WTC11 (cell line): ENCODE measurements at regions of chr10 and their contacts with region 1.

Region 1: GRCh38 chr10:128268015-128268722 is 141.9 kb upstream of the MKI67 start:
- DNase-seq: peak; percentile 85
- ATAC-seq: peak; percentile 92
- H3K4me3 Mint-ChIP-seq: no peak overlapping the region
- H3K27ac Mint-ChIP-seq: no peak overlapping the region
- H3K4me1 Mint-ChIP-seq: peaks cover 42% of the 10 kb centered on the region
- H3K27me3 Mint-ChIP-seq: 0 out of 2 replicates have a peak, but pooled peaks cover 4% of the 10 kb centered on the region
- CTCF ChIP-seq: peak; percentile 72

Region 2: DNA sequence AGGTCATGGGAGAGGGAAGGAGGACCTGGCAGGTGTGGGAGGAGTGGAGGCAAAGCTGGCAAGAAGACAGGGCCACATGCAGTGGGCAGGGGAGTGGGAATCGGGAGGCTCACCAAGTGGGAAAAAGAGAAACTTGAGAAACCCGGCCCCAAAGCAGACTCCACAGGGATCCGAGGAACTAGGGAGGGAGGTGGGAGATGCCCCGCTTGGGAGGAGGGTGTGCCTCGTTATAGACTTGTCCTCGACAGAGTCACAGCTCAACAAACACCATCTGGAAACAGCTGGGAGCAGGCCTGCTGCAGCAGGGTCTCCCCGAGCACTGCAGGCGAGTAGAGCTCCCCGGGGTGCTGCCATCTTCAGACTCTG is 196.8 kb before region 1 on chr10:
- CTCF ChIA-PET with region 1: no interaction called
- POLR2A ChIA-PET with region 1: no interaction called
- DNase-seq: no peak
- ATAC-seq: no peak
- H3K4me3 Mint-ChIP-seq: no peak overlapping the region
- H3K27ac Mint-ChIP-seq: no peak overlapping the region; the same call in 1 of the 2 replicates
- H3K4me1 Mint-ChIP-seq: peaks cover 5% of the 10 kb centered on the region
- H3K27me3 Mint-ChIP-seq: no peaks in the 10 kb centered on the region
- CTCF ChIP-seq: no peak

Region 3: GRCh38 chr10:128150045-128150493 is 118.1 kb before region 1 on chr10:
- CTCF ChIA-PET with region 1: no interaction called
- POLR2A ChIA-PET with region 1: no interaction called
- DNase-seq: peak; percentile 83
- ATAC-seq: peak; percentile 78
- H3K4me3 Mint-ChIP-seq: peak overlapping the region; percentile 64
- H3K27ac Mint-ChIP-seq: no peak overlapping the region
- H3K4me1 Mint-ChIP-seq: peaks cover 13% of the 10 kb centered on the region
- H3K27me3 Mint-ChIP-seq: peaks cover 13% of the 10 kb centered on the region
- CTCF ChIP-seq: peak; percentile 88

Region 4: GRCh38 chr10:128167926-128168520 is 100.1 kb before region 1 on chr10:
- CTCF ChIA-PET with region 1: no interaction called
- POLR2A ChIA-PET with region 1: no interaction called
- DNase-seq: no peak
- ATAC-seq: no peak
- H3K4me3 Mint-ChIP-seq: no peak overlapping the region
- H3K27ac Mint-ChIP-seq: no peak overlapping the region
- H3K4me1 Mint-ChIP-seq: peaks cover 21% of the 10 kb centered on the region
- H3K27me3 Mint-ChIP-seq: no peaks in the 10 kb centered on the region
- CTCF ChIP-seq: no peak

Region 5: GRCh38 chr10:128211953-128212727 is 56.0 kb before region 1 on chr10:
- CTCF ChIA-PET with region 1: interaction called, 11 read pairs
- POLR2A ChIA-PET with region 1: no interaction called
- DNase-seq: peak; percentile 91
- ATAC-seq: peak; percentile 83
- H3K4me3 Mint-ChIP-seq: peak overlapping the region; percentile 63
- H3K27ac Mint-ChIP-seq: no peak overlapping the region
- H3K4me1 Mint-ChIP-seq: peaks cover 39% of the 10 kb centered on the region
- H3K27me3 Mint-ChIP-seq: peaks cover 13% of the 10 kb centered on the region
- CTCF ChIP-seq: peak; percentile 84

Region 6: GRCh38 chr10:128324077-128324827 is 56.1 kb after region 1 on chr10:
- CTCF ChIA-PET with region 1: interaction called, 13 read pairs
- POLR2A ChIA-PET with region 1: no interaction called
- DNase-seq: peak; percentile 75
- ATAC-seq: peak; percentile 100
- H3K4me3 Mint-ChIP-seq: no peak overlapping the region
- H3K27ac Mint-ChIP-seq: no peak overlapping the region
- H3K4me1 Mint-ChIP-seq: peaks cover 13% of the 10 kb centered on the region
- H3K27me3 Mint-ChIP-seq: no peaks in the 10 kb centered on the region
- CTCF ChIP-seq: no peak

Region 7: DNA sequence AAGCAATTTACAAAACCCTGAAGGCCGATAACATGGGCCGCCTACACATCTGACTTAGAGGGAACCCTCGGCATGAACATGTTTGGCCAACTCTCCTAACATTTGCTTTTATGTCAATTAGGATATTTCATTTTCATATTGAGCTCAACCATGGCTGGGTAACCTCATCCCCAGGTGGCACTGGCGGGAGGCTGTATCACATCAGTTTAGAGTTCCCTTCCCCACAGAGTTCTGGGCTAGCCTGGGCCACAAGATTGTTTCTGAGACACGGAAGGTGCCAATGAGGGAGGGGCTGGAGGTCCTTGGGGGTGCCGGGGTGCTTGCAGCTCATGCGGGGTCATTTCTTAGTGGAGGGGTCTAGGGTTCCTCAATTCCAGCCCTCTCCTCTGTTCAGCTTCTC is 244.6 kb after region 1 on chr10:
- CTCF ChIA-PET with region 1: no interaction called
- POLR2A ChIA-PET with region 1: no interaction called
- DNase-seq: no peak
- ATAC-seq: no peak
- H3K4me3 Mint-ChIP-seq: no peak overlapping the region
- H3K27ac Mint-ChIP-seq: no peak overlapping the region
- H3K4me1 Mint-ChIP-seq: peaks cover 9% of the 10 kb centered on the region
- H3K27me3 Mint-ChIP-seq: 0 out of 2 replicates have a peak, but pooled peaks cover 2% of the 10 kb centered on the region
- CTCF ChIP-seq: no peak

Region 8: DNA sequence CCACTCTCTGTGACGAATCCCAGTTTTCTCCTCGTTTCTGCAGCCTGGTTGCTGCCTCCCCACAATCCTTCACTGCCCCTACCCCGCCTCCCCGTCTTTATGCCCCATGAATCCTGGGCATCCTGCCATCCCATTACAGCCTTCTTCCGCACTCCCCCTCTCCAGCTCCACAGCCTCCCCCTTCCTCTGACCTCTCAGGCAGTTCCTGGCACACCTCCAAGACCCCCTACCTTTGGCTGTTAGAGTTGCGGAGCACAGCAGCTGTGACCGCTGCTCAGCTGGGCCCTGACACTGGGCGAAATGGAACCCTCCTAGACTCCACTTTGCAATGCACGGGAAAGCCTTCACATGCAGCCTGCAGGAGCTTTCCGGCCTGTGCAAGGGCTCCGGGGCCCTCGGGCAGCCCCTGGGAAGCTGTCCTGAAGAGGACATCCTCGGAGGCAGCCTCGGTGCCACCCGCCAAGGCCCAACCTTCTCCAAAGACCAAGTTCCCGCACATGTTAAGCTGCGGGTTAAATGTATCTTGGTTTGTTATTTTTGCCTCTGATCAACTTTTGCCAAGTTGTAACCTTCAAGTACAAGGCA is 258.7 kb after region 1 on chr10:
- CTCF ChIA-PET with region 1: interaction called, 19 read pairs
- POLR2A ChIA-PET with region 1: no interaction called
- DNase-seq: peak; percentile 27
- ATAC-seq: peak; percentile 74
- H3K4me3 Mint-ChIP-seq: no peak overlapping the region
- H3K27ac Mint-ChIP-seq: peak overlapping the region; percentile 92
- H3K4me1 Mint-ChIP-seq: peaks cover 45% of the 10 kb centered on the region
- H3K27me3 Mint-ChIP-seq: no peaks in the 10 kb centered on the region
- CTCF ChIP-seq: no peak

Region 9: DNA sequence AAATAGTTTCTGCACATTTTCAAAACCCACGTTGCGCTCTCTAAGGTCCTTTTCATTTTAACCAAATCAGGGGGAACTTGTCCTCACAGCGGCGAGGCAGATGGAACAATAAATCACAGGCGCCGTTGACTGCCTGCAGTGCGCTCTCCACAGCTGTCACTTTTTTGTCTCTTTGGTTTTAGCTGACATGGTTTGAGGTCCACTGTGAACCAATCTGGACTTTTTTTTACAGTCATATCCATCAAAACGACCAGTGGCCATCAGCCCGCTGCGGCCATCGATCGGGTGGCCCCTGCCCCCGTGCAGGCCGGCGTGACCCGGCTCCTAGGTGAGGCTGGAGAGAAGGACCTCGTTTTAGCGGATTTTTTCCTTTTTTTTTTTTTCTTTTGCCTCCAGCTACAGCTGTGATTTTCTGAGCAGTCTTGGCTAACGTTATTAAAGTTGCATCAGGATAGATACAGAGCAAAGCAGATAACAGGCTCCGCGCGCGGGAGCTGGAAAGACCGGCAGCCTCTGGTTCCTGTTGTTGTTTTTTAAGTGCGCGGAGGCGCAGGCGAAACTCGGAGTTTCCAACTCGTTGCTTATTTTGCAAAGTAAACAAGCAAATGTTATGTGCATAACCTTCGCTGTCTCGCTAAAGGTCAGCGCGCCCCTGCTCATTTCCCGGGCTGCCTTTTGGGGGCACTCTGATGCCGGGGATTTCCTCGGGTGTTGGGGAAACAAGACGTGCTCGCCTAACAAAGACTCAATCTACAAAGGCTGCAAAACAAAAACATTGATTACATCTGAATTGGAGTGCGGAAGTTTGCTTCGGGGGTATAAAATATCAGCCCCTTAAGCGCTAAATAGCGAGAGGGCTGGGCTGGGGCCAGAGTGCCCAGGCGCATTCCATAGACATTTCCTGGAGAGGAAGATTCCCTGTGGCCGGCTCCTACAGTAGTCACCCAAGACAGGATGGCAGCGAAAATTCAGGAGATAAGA is 272.9 kb after region 1 on chr10:
- CTCF ChIA-PET with region 1: interaction called, 10 read pairs
- POLR2A ChIA-PET with region 1: no interaction called
- DNase-seq: peak; percentile 82
- ATAC-seq: peak; percentile 74
- H3K4me3 Mint-ChIP-seq: peak overlapping the region; percentile 76
- H3K27ac Mint-ChIP-seq: peak overlapping the region; percentile 98
- H3K4me1 Mint-ChIP-seq: peaks cover 91% of the 10 kb centered on the region
- H3K27me3 Mint-ChIP-seq: peaks cover 6% of the 10 kb centered on the region; the same call in 1 of the 2 replicates
- CTCF ChIP-seq: no peak

Region 10: GRCh38 chr10:128571745-128572144 is 303.6 kb after region 1 on chr10:
- CTCF ChIA-PET with region 1: interaction called, 11 read pairs
- POLR2A ChIA-PET with region 1: no interaction called
- DNase-seq: no peak
- ATAC-seq: peak; percentile 27; the same call in 1 of the 2 replicates
- H3K4me3 Mint-ChIP-seq: no peak overlapping the region
- H3K27ac Mint-ChIP-seq: no peak overlapping the region
- H3K4me1 Mint-ChIP-seq: peaks cover 48% of the 10 kb centered on the region
- H3K27me3 Mint-ChIP-seq: peaks cover 9% of the 10 kb centered on the region
- CTCF ChIP-seq: no peak